CD4-positive, alpha-beta memory T cell (primary cell): ENCODE measurements at regions of chr4 and their contacts with region 1.

Region 1: GRCh38 chr4:24584175-24584850 is at the start of gene DHX15:
- DNase-seq: peak; percentile 91 to 94 (median 93)
- H3K4me3 ChIP-seq: peak within 1 kb of the TSS; percentile 85 to 96
- H3K4me3 Mint-ChIP-seq: peak within 1 kb of the TSS; percentile 97 to 100 (median 99)
- H3K27ac ChIP-seq: peak within 1 kb of the TSS; percentile 98
- H3K27ac Mint-ChIP-seq: peak within 1 kb of the TSS; percentile 97 to 100 (median 99)
- H3K4me1 ChIP-seq: peaks cover 45% of the 10 kb centered on the region
- H3K4me1 Mint-ChIP-seq: peaks cover 26 to 48% (median 40%) of the 10 kb centered on the region in 4 donors
- H3K27me3 ChIP-seq: no peaks in the 10 kb centered on the region
- H3K27me3 Mint-ChIP-seq: peaks cover 0 to 3% of the 10 kb centered on the region in 2 donors
- total RNA-seq, gene DHX15: 129 to 131 TPM

Region 2: DNA sequence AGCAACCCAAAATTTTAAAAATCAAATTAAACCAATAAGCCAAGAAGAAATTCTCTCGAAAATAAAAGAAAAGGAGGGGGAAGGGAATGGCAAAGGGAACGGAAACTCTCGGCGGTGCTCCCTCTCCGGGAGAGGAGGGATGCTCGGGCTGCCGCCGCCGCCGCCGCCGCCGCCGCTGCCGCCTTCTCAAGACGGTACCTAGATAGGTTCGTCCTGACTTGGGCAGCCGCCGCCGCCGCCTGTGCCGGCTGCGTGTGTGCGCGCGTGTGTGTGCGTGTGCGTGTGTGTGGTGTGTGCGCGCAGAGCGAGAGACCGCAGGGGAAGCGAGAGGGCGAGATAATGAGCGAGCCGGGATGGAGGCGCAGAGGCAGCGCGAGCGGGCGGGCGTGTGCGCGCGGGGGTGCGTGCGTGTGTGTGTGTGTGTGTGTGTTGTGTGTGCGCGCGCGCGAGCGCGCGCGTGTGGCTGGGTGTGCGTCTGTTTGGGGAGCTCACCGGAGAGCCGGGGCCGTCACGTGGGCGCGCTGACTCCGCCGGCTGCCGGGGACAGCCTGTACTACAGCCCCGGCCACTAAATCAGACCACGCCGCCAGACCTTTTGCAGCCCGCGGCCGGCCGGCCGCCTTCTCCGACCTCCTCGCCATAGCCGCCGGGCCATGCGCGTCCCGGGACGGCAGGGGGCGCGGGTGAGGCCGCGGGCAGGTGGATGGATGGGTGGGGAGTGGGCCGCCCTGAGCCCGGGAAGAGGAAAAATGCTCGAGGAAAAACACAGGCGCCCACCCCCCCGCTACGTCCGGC is 111.6 kb before region 1 on chr4:
- CTCF ChIA-PET with region 1: interaction called, 3 read pairs
- POLR2A ChIA-PET with region 1: interaction called, 9 read pairs
- intact Hi-C with region 1: loop called (anchors 1 kb)
- DNase-seq: peak; percentile 62 to 78 (median 70)
- H3K4me3 ChIP-seq: peak overlapping the region; percentile 14 to 40
- H3K4me3 Mint-ChIP-seq: peak overlapping the region; percentile 90 to 99 (median 96)
- H3K27ac ChIP-seq: no peak overlapping the region
- H3K27ac Mint-ChIP-seq: peak overlapping the region; percentile 55 to 98 (median 92)
- H3K4me1 ChIP-seq: peaks cover 25% of the 10 kb centered on the region
- H3K4me1 Mint-ChIP-seq: peaks cover 23 to 45% (median 32%) of the 10 kb centered on the region in 4 donors
- H3K27me3 ChIP-seq: peaks cover 13% of the 10 kb centered on the region
- H3K27me3 Mint-ChIP-seq: peaks cover 39 to 45% of the 10 kb centered on the region in 2 donors

Region 3: DNA sequence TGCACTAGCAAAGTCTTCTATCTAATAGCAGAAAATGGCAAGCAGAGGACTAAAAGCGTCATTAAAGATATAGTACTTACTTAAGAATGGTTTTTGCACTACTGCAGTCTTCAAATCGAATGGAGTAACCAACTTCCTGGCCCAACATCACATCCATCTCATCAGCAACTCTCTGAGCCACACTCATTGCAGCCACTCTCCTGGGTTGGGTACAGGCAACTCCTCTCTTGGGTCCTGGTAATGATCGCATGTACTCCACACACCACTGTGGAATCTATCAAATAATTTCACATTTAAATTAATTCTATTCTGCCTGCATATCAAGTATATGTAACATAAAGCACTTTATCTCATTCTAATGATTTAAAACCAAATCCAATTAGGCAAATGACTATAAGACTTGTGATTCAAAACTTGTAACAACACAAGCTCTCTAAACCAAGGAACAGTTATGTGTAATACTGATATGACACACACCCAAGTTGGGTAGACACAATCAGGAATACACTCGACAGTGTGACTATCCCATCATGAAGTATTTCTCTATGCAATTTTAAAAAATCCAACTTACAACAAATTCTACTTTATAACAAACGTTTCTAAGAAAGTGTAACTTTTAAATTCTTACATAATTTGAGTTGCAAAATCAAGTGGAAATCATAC is 13.6 kb before region 1 on chr4:
- CTCF ChIA-PET with region 1: no interaction called
- POLR2A ChIA-PET with region 1: interaction called, 15 read pairs
- intact Hi-C with region 1: loop called (anchors 2 kb)
- DNase-seq: no peak
- H3K4me3 ChIP-seq: no peak overlapping the region
- H3K4me3 Mint-ChIP-seq: peak overlapping the region; percentile 14 to 66 (median 34)
- H3K27ac ChIP-seq: no peak overlapping the region
- H3K27ac Mint-ChIP-seq: peak overlapping the region in 6 of 7 donors; percentile 18 to 56 (median 44)
- H3K4me1 ChIP-seq: peaks cover 68% of the 10 kb centered on the region
- H3K4me1 Mint-ChIP-seq: peaks cover 53 to 86% (median 72%) of the 10 kb centered on the region in 4 donors
- H3K27me3 ChIP-seq: no peaks in the 10 kb centered on the region
- H3K27me3 Mint-ChIP-seq: no peaks in the 10 kb centered on the region

Region 4: DNA sequence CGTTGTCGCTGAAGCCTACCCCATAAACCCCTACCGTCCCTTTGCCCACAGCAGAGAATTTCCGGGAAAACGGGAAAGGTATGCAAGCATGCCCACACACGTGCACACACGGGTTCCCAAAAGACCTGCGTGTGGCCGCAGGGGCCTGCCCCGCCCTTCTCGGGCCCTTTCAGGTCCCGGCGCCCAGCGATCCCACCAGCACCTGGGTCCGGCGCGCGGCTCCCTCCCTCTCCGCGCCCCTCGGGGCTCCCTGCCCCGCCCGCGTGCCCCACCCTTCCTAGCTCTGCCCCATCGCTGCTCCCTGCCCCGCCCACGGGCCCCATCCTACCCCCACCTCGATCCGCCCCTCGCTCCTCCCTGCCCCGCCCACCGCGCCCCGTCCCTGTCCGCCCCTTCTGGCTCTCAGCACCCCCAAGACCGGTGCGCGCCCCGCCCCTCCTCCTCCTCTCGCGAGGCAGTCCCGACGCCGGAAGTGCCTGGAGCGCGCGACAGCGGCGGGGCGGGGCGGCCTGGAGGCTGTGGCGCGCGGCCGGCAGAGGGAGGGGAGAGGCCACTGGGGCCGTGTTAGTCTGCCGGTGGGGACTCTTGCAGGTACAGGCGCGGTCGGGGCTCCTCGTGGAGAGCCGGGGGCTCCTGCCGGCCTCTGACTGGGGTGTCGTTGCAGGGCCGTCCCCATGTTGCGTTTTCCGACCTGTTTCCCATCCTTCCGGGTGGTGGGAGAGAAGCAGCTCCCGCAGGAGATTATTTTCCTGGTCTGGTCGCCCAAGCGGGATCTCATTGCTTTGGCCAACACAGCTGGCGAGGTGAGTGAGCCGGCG is 792.6 kb after region 1 on chr4 and contains the start of gene ANAPC4:
- CTCF ChIA-PET with region 1: no interaction called
- POLR2A ChIA-PET with region 1: interaction called, 4 read pairs
- intact Hi-C with region 1: loop called (anchors 10 kb)
- DNase-seq: peak; percentile 92 to 97 (median 93)
- H3K4me3 ChIP-seq: peak within 1 kb of the TSS; percentile 57 to 95
- H3K4me3 Mint-ChIP-seq: peak within 1 kb of the TSS in 1 of 8 donors; percentile 80
- H3K27ac ChIP-seq: peak within 1 kb of the TSS; percentile 73
- H3K27ac Mint-ChIP-seq: peak within 1 kb of the TSS; percentile 65 to 92 (median 89)
- H3K4me1 ChIP-seq: peaks cover 24% of the 10 kb centered on the region
- H3K4me1 Mint-ChIP-seq: peaks cover 3 to 13% (median 10%) of the 10 kb centered on the region in 4 donors
- H3K27me3 ChIP-seq: no peaks in the 10 kb centered on the region
- H3K27me3 Mint-ChIP-seq: no peaks in the 10 kb centered on the region
- total RNA-seq, gene ANAPC4: 61.8 to 63.7 TPM